BJ (cell line): ENCODE measurements at regions of chr4 and their contacts with region 1.

Region 1: GRCh38 chr4:1899149-1900086 is 28.2 kb downstream of the NSD2 start:
- DNase-seq: no peak
- H3K4me3 ChIP-seq: no peak overlapping the region
- H3K27me3 ChIP-seq: no peaks in the 10 kb centered on the region
- CTCF ChIP-seq: peak; percentile 83

Region 2: DNA sequence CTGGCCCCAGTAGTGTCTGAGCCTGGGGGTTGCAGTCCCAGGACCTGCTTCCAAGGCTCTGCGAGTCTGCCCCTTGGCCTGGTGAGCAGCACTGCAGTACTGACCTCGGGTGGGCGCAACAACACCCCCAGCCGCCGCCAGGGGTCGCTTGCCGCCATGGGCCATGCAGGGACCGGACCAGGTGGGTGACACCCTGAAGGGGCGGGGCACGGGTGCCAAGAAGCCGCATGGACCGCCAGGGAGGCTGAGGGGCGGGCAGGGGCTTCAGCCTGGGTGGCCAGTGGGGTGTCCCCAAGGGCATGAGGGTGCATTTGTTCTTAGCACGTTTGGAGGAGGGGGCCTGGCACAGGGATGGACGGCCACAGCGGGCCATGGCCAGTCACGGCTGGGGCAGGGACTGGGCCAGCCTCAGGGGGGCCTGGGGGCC is 153.1 kb before region 1 on chr4:
- CTCF ChIA-PET with region 1: interaction called, 64 read pairs
- POLR2A ChIA-PET with region 1: no interaction called
- DNase-seq: no peak
- H3K4me3 ChIP-seq: no peak overlapping the region
- H3K27me3 ChIP-seq: no peaks in the 10 kb centered on the region
- CTCF ChIP-seq: peak; percentile 94

Region 3: DNA sequence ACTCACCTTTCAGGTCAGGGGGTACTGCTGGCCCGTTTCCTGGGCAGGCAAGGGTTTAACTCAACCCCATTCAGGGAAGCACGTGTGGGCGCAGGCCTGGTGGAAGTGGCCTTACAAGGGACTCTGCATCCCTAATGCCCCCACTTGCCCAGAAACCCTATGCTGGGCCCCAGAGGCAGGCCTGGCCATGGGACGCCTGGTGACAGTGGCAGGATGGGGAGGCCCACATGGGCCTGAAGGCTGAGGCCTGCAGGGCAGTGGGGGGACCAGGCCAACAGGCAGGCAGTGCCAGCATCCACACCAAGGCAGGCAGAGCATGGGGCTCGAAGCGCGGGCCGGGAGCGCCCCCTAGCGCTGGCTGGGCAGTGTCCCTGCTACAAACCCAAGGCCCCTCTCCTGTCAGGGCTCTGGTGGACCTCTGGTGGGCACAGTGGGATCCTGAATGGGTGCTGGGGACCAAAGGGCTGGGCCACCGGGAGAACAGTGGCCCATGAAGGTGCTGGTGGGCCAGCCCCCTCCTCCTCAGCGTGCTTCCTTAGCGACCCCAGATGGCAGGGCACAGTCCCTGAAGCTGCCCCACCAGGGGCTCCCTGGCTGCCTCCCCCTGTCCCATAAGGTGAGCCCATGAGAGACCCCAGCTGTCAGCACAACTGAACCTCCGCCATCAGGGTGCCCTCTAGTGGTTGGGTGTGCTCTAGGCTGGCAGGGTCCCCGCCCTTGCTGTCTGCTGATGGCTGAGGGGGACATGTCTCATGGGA is 89.5 kb before region 1 on chr4:
- CTCF ChIA-PET with region 1: interaction called, 22 read pairs
- POLR2A ChIA-PET with region 1: no interaction called
- DNase-seq: no peak
- H3K4me3 ChIP-seq: no peak overlapping the region
- H3K27me3 ChIP-seq: no peaks in the 10 kb centered on the region
- CTCF ChIP-seq: peak; percentile 93

Region 4: GRCh38 chr4:1842993-1843448 is 56.4 kb before region 1 on chr4:
- CTCF ChIA-PET with region 1: interaction called, 20 read pairs
- POLR2A ChIA-PET with region 1: no interaction called
- DNase-seq: peak; percentile 61
- H3K4me3 ChIP-seq: no peak overlapping the region
- H3K27me3 ChIP-seq: no peaks in the 10 kb centered on the region
- CTCF ChIP-seq: no peak

Region 5: DNA sequence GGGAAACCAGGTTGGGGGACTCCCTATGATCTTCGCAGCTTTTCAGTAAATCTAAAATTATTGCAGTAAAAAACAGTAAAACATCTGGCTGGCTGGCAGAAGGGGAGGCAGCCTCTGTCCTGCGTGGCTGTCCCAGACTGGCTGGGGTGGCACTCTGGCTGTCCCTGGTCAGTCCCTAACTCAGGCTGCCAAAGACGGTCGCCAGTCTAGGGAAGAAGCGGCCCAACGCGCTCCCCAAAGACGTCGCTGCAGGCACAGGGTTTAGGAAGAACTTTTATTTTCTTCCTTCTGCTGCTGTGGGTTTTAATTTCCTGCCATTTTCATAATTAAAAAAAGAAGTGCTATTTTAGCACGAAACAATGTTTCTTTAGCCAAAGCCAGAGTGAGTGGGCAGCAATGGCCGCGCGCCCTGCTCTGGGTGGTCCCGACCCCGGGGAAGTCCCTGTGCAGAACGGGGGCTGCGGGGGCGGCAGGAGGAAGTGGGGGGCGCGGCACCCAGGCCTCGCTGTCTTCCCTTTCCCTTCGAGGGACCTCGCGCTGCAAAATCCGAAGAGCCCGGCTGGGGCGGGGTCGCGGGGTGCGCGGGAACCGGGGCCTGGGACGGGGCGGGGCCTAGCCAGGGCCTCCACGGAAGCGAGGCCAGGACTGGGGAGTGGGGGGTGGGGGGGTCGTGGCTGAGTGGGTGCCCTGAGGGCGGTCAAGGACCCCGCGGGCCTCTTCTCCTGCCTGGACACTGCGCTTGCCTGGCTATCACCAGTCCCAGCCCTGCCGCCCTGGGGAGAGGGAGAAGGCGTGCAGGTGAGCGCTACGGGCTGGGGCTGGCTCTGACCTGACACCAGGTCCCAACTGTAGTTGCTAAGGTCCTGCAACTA is 37.1 kb before region 1 on chr4:
- CTCF ChIA-PET with region 1: interaction called, 30 read pairs
- POLR2A ChIA-PET with region 1: no interaction called
- DNase-seq: no peak
- H3K4me3 ChIP-seq: peak overlapping the region; percentile 27
- H3K27me3 ChIP-seq: peaks cover 2% of the 10 kb centered on the region; the same call in 1 of the 2 replicates
- CTCF ChIP-seq: no peak

Region 6: DNA sequence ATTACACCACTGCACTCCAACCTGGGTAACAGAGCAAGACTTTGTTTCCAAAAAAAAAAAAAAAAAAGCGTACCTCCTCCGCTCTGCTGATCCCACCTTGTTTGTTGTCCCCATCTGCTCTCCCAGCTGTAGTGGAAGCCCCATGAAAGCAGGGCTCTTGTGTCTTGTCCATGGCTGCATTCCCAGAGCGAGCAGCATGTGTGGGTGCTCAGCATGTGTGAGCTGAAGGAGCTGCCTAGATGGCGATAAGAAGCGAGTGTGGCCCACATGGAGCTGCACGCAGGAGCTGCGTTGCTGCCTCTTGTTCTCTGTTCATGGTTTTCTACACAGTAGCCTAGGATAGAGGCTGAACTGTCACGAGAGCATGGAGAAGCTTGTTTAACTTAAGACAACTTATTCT is 15.8 kb before region 1 on chr4:
- CTCF ChIA-PET with region 1: interaction called, 74 read pairs
- POLR2A ChIA-PET with region 1: no interaction called
- DNase-seq: no peak
- H3K4me3 ChIP-seq: no peak overlapping the region
- H3K27me3 ChIP-seq: no peaks in the 10 kb centered on the region
- CTCF ChIP-seq: no peak